ENCODE measurements at regions of chr2 and their contacts with region 1.

Region 1: GRCh38 chr2:48391616-48392015 is 138.3 kb upstream of the STON1 start:
- DNase-seq: peak; percentile 77 to 78
- H3K4me3 ChIP-seq: no peak overlapping the region
- H3K4me3 Mint-ChIP-seq: peak overlapping the region; percentile 22
- H3K27ac Mint-ChIP-seq: peak overlapping the region; percentile 68
- H3K4me1 ChIP-seq: peaks cover 26% of the 10 kb centered on the region
- H3K4me1 Mint-ChIP-seq: peaks cover 24% of the 10 kb centered on the region
- H3K27me3 ChIP-seq: no peaks in the 10 kb centered on the region
- H3K27me3 Mint-ChIP-seq: no peaks in the 10 kb centered on the region
- CTCF ChIP-seq: no peak

Region 2: GRCh38 chr2:48205137-48205798 is 186.3 kb before region 1 on chr2:
- CTCF ChIA-PET with region 1: no interaction called
- POLR2A ChIA-PET with region 1: no interaction called
- intact Hi-C with region 1: no loop called
- DNase-seq: no peak
- H3K4me3 ChIP-seq: no peak overlapping the region
- H3K4me3 Mint-ChIP-seq: no peak overlapping the region
- H3K27ac Mint-ChIP-seq: no peak overlapping the region
- H3K4me1 ChIP-seq: no peaks in the 10 kb centered on the region
- H3K4me1 Mint-ChIP-seq: no peaks in the 10 kb centered on the region
- H3K27me3 ChIP-seq: no peaks in the 10 kb centered on the region
- H3K27me3 Mint-ChIP-seq: no peaks in the 10 kb centered on the region
- CTCF ChIP-seq: peak in 1 of 2 experiments; percentile 32

Region 3: GRCh38 chr2:48343571-48344440 is 47.8 kb before region 1 on chr2:
- CTCF ChIA-PET with region 1: no interaction called
- POLR2A ChIA-PET with region 1: no interaction called
- intact Hi-C with region 1: loop called (anchors 1 kb)
- DNase-seq: peak in 1 of 2 experiments; percentile 38
- H3K4me3 ChIP-seq: no peak overlapping the region
- H3K4me3 Mint-ChIP-seq: peak overlapping the region; percentile 73
- H3K27ac Mint-ChIP-seq: peak overlapping the region; percentile 87
- H3K4me1 ChIP-seq: peaks cover 35% of the 10 kb centered on the region
- H3K4me1 Mint-ChIP-seq: peaks cover 18% of the 10 kb centered on the region
- H3K27me3 ChIP-seq: no peaks in the 10 kb centered on the region
- H3K27me3 Mint-ChIP-seq: no peaks in the 10 kb centered on the region
- CTCF ChIP-seq: no peak

Region 4: DNA sequence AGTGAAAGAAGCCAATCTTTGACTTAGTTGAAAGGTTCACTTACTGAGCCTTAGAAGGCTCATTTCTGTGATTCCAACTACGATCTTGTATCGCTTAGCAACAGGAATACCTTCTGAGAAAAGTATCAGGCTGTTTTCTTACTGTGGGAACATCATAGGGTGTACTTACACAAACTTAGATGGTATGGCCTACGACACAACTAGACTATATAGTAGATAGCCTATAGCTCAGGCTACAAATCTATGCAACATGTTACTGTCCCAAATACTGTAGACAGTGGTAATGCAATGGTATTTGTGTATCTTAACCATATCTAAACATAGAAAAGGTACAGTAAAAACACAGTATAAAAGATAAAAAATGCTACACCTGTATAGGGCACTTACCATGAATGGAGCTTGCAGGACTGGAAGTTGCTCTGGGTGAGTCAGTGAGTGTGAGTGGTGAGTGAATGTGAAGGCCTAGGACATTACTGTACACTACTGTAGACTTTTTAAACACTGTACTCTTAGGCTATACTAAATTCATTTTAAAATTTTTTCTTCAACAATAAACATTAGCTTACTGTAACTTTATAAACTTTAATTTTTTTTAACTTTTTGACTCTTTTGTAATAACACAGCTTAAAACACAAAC is 10.5 kb before region 1 on chr2:
- CTCF ChIA-PET with region 1: no interaction called
- POLR2A ChIA-PET with region 1: no interaction called
- intact Hi-C with region 1: no loop called
- DNase-seq: no peak
- H3K4me3 ChIP-seq: no peak overlapping the region
- H3K4me3 Mint-ChIP-seq: no peak overlapping the region
- H3K27ac Mint-ChIP-seq: no peak overlapping the region
- H3K4me1 ChIP-seq: no peaks in the 10 kb centered on the region
- H3K4me1 Mint-ChIP-seq: no peaks in the 10 kb centered on the region
- H3K27me3 ChIP-seq: no peaks in the 10 kb centered on the region
- H3K27me3 Mint-ChIP-seq: no peaks in the 10 kb centered on the region
- CTCF ChIP-seq: no peak

Region 5: DNA sequence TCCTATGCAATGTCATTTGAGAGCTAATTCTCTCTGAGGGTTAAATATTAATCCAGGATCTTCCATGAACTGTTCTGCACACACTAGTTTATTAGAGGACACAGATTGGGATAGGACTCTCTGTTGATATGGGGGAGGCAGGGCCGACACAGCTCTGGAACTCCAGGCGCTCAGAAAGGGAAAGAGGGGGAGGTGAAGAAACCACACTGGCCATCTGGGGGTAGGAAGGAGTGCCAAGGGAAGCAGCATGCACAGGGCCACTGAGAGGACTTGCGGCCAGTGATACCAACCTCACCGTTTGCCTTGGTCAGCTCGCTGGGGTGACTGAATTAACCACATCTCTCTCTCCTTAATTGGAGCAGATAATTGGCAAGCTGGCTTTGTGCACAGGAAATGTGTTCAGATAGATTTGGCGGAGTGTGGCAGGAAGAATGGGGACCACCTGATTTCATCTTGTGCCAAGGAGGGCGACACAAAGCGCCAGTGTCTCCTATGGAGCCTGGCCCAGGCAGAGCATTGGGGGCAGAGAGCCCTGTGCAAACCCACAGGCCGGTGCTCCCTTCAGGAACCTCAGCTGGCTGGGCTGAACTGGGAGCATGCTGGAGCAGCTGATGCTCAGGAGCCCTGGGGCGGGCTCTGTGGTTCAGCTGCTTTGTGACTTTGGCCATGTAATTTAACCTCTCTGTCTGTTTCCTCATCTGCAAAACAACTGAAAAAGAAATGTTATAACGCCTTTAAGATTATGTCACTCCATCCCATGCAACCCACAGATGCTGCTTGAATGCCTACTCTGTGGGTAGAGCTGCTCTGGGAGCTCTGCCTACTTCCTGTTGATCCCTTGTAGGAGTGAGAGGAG is 23.6 kb after region 1 on chr2:
- CTCF ChIA-PET with region 1: no interaction called
- POLR2A ChIA-PET with region 1: no interaction called
- intact Hi-C with region 1: loop called (anchors 1 kb)
- DNase-seq: no peak
- H3K4me3 ChIP-seq: no peak overlapping the region
- H3K4me3 Mint-ChIP-seq: peak overlapping the region; percentile 21
- H3K27ac Mint-ChIP-seq: peak overlapping the region; percentile 67
- H3K4me1 ChIP-seq: peaks cover 25% of the 10 kb centered on the region
- H3K4me1 Mint-ChIP-seq: peaks cover 30% of the 10 kb centered on the region
- H3K27me3 ChIP-seq: no peaks in the 10 kb centered on the region
- H3K27me3 Mint-ChIP-seq: no peaks in the 10 kb centered on the region
- CTCF ChIP-seq: no peak

Region 6: GRCh38 chr2:48527226-48527880 is 135.7 kb after region 1 on chr2:
- CTCF ChIA-PET with region 1: no interaction called
- POLR2A ChIA-PET with region 1: no interaction called
- intact Hi-C with region 1: no loop called
- DNase-seq: no peak
- H3K4me3 ChIP-seq: no peak overlapping the region
- H3K4me3 Mint-ChIP-seq: no peak overlapping the region
- H3K27ac Mint-ChIP-seq: no peak overlapping the region
- H3K4me1 ChIP-seq: no peaks in the 10 kb centered on the region
- H3K4me1 Mint-ChIP-seq: peaks cover 7% of the 10 kb centered on the region
- H3K27me3 ChIP-seq: no peaks in the 10 kb centered on the region
- H3K27me3 Mint-ChIP-seq: no peaks in the 10 kb centered on the region
- CTCF ChIP-seq: no peak